Activated CD4-positive, alpha-beta memory T cell treated with anti-CD3 and anti-CD28 coated beads for 36 hours (primary cell): ENCODE measurements at regions of chr9 and their contacts with region 1.

Region 1: DNA sequence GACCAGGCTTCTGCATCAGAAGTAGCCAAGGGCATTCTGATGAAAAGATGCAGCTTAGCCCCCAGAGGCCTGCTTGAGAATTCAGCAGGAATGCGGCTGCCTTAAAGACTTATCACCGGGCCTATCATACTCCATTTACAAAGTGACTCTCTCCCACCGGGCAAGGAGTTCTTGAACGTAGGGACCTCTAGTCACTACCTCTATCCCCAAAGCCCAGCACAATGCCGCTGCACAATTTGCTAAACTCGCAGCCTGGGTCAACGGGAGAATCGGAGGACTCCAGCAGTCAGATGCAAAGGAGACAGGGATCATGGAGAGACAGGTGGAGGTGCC is 661 bp downstream of the PDCL start:
- DNase-seq: no peak
- H3K4me3 Mint-ChIP-seq: peak overlapping the region; percentile 97
- H3K27ac Mint-ChIP-seq: peak overlapping the region; percentile 81
- H3K4me1 Mint-ChIP-seq: peaks cover 34% of the 10 kb centered on the region
- H3K27me3 Mint-ChIP-seq: no peaks in the 10 kb centered on the region

Region 2: GRCh38 chr9:122931226-122932121 is 103.7 kb after region 1 on chr9 and contains the start of gene ZBTB26:
- CTCF ChIA-PET with region 1: no interaction called
- POLR2A ChIA-PET with region 1: no interaction called
- intact Hi-C with region 1: loop called (anchors 1 kb)
- DNase-seq: peak; percentile 95
- H3K4me3 Mint-ChIP-seq: no peak within 1 kb of the TSS
- H3K27ac Mint-ChIP-seq: peak within 1 kb of the TSS; percentile 92
- H3K4me1 Mint-ChIP-seq: peaks cover 13% of the 10 kb centered on the region
- H3K27me3 Mint-ChIP-seq: no peaks in the 10 kb centered on the region
- total RNA-seq, gene ZBTB26: 6.1 to 6.4 TPM